Heart right ventricle (tissue), 16 donors: ENCODE measurements at regions of chr2 and their contacts with region 1.

Region 1: DNA sequence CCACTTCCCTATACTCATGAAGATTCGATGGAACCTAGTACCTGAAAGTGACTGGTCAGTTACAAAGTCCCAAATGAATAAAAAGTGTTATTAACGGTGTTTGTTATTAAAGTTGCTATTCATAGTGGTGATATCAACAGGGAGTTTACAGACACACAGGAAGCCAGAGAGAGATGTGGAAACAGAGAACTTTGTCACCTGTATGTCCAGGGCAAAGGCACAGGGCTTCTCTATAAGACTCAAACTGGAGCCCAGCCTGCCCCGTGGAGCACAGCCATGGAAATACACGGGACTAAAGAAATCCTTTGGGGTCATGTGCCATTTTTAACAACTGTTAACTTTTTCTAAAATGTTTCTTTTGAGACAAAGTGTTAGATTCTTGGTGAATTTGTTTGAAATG is 68.5 kb downstream of the KLF7 start:
- DNase-seq: no peak
- ATAC-seq: peak in 5 of 8 donors; percentile 50 to 63 (median 56)
- H3K4me3 ChIP-seq: no peak overlapping the region
- H3K27ac ChIP-seq: peak overlapping the region in 9 of 10 donors; percentile 26 to 78 (median 57)
- H3K4me1 ChIP-seq: peaks cover 14 to 79% (median 58%) of the 10 kb centered on the region in 9 donors
- H3K27me3 ChIP-seq: no peaks in the 10 kb centered on the region
- CTCF ChIP-seq: no peak

Region 2: GRCh38 chr2:207133820-207134519 is 36.7 kb after region 1 on chr2:
- intact Hi-C with region 1: loop called in 4 of 10 experiments (anchors 5 kb)
- DNase-seq: peak; percentile 56 to 88
- ATAC-seq: peak; percentile 93 to 98 (median 96)
- H3K4me3 ChIP-seq: peak overlapping the region in 4 of 10 donors; percentile 5 to 32 (median 18)
- H3K27ac ChIP-seq: peak overlapping the region; percentile 76 to 94 (median 87)
- H3K4me1 ChIP-seq: peaks cover 40 to 100% (median 96%) of the 10 kb centered on the region in 9 donors
- H3K27me3 ChIP-seq: no peaks in the 10 kb centered on the region
- CTCF ChIP-seq: no peak

Region 3: GRCh38 chr2:207143215-207144172 is 46.2 kb after region 1 on chr2:
- intact Hi-C with region 1: loop called in 2 of 10 experiments (anchors 5 to 10 kb)
- DNase-seq: peak; percentile 72 to 80
- ATAC-seq: peak; percentile 77 to 91 (median 87)
- H3K4me3 ChIP-seq: peak overlapping the region in 8 of 10 donors; percentile 6 to 44 (median 28)
- H3K27ac ChIP-seq: peak overlapping the region; percentile 69 to 94 (median 88)
- H3K4me1 ChIP-seq: peaks cover 29 to 100% (median 97%) of the 10 kb centered on the region in 9 donors
- H3K27me3 ChIP-seq: no peaks in the 10 kb centered on the region
- CTCF ChIP-seq: no peak